Common myeloid progenitor, CD34-positive (primary cell): ENCODE measurements at regions of chr14 and their contacts with region 1.

Region 1: GRCh38 chr14:36553656-36554260 is 28.7 kb downstream of the NKX2-8 start:
- DNase-seq: peak; percentile 50 to 67 (median 57)
- H3K4me3 ChIP-seq: no peak overlapping the region
- H3K27ac ChIP-seq: no peak overlapping the region
- H3K4me1 ChIP-seq: no peaks in the 10 kb centered on the region
- H3K27me3 ChIP-seq: peaks cover 2 to 36% (median 5%) of the 10 kb centered on the region in 5 experiments

Region 2: DNA sequence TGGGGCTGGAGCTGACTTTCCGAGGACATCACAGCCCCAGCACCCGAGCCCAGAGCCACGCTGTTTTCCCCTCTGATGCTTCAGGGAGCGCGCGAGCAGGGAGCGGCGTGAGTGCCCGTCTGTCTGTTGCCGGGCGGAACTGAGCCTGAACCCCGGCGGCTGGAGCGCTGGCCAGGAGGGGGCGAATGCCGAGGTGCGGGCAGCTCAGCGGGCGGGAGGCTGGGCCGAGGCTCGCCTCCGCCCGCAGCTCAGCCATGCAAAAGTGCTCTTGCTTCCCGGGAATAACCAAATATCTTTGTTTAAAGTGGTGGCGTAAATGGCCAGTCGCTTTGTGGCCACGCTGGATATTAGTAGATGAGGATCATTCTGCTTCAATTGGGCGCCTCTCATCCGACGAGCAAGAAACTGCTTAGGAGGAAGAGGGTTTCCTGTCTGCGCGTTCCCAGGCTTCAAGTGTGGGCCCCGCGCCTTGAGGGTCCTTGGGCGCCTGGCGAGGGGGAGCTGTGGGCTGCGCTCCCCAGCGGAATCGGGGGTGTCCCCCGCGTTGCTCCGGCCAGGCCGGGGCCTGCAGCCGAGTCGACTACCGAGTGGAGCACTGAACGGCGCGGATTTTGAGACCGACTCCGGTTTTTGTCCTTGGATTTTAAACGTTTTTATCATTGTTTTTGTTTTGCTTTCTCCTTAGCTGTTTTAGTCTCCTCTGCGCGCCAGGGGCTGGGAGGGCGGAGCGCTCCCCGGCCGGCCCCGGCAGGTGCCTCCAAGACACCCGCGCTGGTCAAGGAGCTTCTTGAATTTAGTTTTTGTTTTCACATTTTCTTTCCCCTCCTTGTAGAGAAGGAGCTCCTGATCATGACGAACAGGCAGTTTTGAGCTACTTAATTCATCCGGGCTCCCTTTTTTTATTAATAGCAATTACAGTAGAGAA is 32.9 kb before region 1 on chr14:
- CTCF ChIA-PET with region 1: interaction called, 11 read pairs
- POLR2A ChIA-PET with region 1: no interaction called
- DNase-seq: peak in 1 of 3 donors; percentile 39
- H3K4me3 ChIP-seq: peak overlapping the region in 4 of 7 experiments; percentile 11 to 58 (median 32)
- H3K27ac ChIP-seq: no peak overlapping the region
- H3K4me1 ChIP-seq: peaks cover 0 to 38% (median 15%) of the 10 kb centered on the region in 4 experiments
- H3K27me3 ChIP-seq: peaks cover 9 to 99% (median 57%) of the 10 kb centered on the region in 5 experiments

Region 3: GRCh38 chr14:36604757-36605505 is 51.2 kb after region 1 on chr14:
- CTCF ChIA-PET with region 1: interaction called, 11 read pairs
- POLR2A ChIA-PET with region 1: no interaction called
- DNase-seq: peak; percentile 54 to 76 (median 60)
- H3K4me3 ChIP-seq: no peak overlapping the region
- H3K27ac ChIP-seq: no peak overlapping the region
- H3K4me1 ChIP-seq: no peaks in the 10 kb centered on the region
- H3K27me3 ChIP-seq: peaks cover 0 to 40% (median 11%) of the 10 kb centered on the region in 5 experiments